Activated CD4-positive, alpha-beta memory T cell treated with anti-CD3 and anti-CD28 coated beads for 36 hours (primary cell): ENCODE measurements at regions of chr16 and their contacts with region 1.

Region 1: DNA sequence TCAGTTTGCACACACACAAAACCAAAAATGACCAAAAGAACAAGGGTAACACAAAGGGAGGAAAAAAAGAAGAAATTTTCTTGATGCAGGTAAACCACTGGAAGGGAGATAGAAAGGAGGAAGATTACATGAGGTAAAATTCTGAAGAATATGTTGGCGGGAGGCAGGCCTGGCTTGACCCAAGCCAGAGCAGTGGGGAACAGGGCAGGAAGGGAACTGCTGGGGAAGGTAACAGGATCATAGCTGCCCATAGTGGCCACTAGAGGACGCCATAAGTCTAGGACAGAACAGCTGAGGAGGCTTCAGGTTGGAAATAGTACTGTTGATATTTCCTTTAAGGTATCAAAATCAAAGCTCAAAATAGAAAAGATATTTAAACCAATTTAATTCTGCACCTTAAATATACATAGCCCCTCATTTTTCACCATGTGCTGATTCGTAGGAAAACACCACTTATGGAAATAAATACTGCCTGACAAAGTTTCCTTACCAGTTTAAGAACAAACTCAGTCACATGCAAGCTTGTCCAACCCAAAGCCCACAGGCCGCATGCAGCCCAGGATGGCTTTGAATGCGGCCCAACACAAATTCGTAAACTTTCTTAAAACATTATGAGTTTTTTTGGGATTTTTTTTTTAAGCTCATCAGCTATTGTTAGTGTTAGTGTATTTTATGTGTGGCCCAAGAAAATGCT is 15.5 kb downstream of the VPS35 start:
- DNase-seq: peak; percentile 61
- H3K4me3 Mint-ChIP-seq: no peak overlapping the region
- H3K27ac Mint-ChIP-seq: no peak overlapping the region
- H3K4me1 Mint-ChIP-seq: no peaks in the 10 kb centered on the region
- H3K27me3 Mint-ChIP-seq: no peaks in the 10 kb centered on the region

Region 2: GRCh38 chr16:46658925-46659324 is 14.5 kb before region 1 on chr16:
- CTCF ChIA-PET with region 1: interaction called, 14 read pairs
- POLR2A ChIA-PET with region 1: no interaction called
- intact Hi-C with region 1: no loop called
- DNase-seq: peak; percentile 57
- H3K4me3 Mint-ChIP-seq: no peak overlapping the region
- H3K27ac Mint-ChIP-seq: peak overlapping the region; percentile 64
- H3K4me1 Mint-ChIP-seq: peaks cover 12% of the 10 kb centered on the region
- H3K27me3 Mint-ChIP-seq: no peaks in the 10 kb centered on the region

Region 3: DNA sequence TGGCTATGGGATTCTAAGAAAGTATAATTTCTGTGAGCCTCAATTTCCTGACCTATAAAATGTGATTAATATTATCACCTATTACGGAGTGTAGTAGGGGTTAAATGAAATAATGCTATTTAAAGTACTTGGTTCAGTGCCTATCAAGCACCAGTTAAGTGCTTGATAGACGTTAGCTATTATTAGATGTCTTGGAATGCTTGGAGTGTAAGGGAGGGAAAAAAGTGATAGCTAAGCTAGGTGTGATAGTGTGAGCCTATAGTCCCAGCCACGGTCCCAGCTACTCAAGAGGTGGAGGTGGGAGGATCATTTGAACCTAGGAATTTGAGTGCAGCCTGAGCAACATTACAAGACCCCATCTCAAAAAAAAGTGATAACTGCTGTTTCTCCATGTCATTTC is 23.5 kb after region 1 on chr16:
- CTCF ChIA-PET with region 1: interaction called, 36 read pairs
- POLR2A ChIA-PET with region 1: interaction called, 3 read pairs
- intact Hi-C with region 1: no loop called
- DNase-seq: no peak
- H3K4me3 Mint-ChIP-seq: no peak overlapping the region
- H3K27ac Mint-ChIP-seq: no peak overlapping the region
- H3K4me1 Mint-ChIP-seq: no peaks in the 10 kb centered on the region
- H3K27me3 Mint-ChIP-seq: no peaks in the 10 kb centered on the region

Region 4: DNA sequence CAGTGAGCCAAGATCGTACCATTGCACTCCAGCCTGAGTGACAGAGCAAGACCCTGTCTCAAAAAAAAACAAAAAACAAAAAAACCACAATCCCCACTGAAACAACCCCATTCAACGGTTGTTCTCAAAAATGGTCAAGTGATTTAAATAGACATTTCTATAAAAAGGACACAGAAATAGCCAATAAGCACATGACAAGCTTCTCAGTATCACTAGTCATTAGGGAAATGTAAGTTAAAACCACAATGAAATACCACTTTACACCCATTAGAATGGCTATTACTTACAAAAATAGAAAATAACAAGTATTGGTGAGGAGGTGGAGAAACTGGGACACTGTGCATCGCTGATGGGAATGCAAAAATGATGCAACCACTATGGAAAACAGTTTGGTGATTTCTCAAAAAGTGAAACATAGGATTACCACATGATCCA is 101.3 kb after region 1 on chr16:
- CTCF ChIA-PET with region 1: no interaction called
- POLR2A ChIA-PET with region 1: no interaction called
- intact Hi-C with region 1: no loop called
- DNase-seq: no peak
- H3K4me3 Mint-ChIP-seq: no peak overlapping the region
- H3K27ac Mint-ChIP-seq: no peak overlapping the region
- H3K4me1 Mint-ChIP-seq: no peaks in the 10 kb centered on the region
- H3K27me3 Mint-ChIP-seq: no peaks in the 10 kb centered on the region

Region 5: GRCh38 chr16:46853713-46854443 is 180.4 kb after region 1 on chr16:
- CTCF ChIA-PET with region 1: interaction called, 15 read pairs
- POLR2A ChIA-PET with region 1: no interaction called
- intact Hi-C with region 1: loop called (anchors 1 kb)
- DNase-seq: peak; percentile 77
- H3K4me3 Mint-ChIP-seq: no peak overlapping the region
- H3K27ac Mint-ChIP-seq: no peak overlapping the region
- H3K4me1 Mint-ChIP-seq: no peaks in the 10 kb centered on the region
- H3K27me3 Mint-ChIP-seq: peaks cover 3% of the 10 kb centered on the region

Region 6: GRCh38 chr16:46908540-46909372 is 235.3 kb after region 1 on chr16:
- CTCF ChIA-PET with region 1: interaction called, 68 read pairs
- POLR2A ChIA-PET with region 1: no interaction called
- intact Hi-C with region 1: loop called (anchors 1 kb)
- DNase-seq: peak; percentile 66
- H3K4me3 Mint-ChIP-seq: no peak overlapping the region
- H3K27ac Mint-ChIP-seq: no peak overlapping the region
- H3K4me1 Mint-ChIP-seq: peaks cover 5% of the 10 kb centered on the region
- H3K27me3 Mint-ChIP-seq: no peaks in the 10 kb centered on the region

Region 7: GRCh38 chr16:46929378-46930332 is 256.2 kb after region 1 on chr16:
- CTCF ChIA-PET with region 1: interaction called, 11 read pairs
- POLR2A ChIA-PET with region 1: no interaction called
- intact Hi-C with region 1: loop called (anchors 1 kb)
- DNase-seq: peak; percentile 82
- H3K4me3 Mint-ChIP-seq: no peak overlapping the region
- H3K27ac Mint-ChIP-seq: no peak overlapping the region
- H3K4me1 Mint-ChIP-seq: no peaks in the 10 kb centered on the region
- H3K27me3 Mint-ChIP-seq: no peaks in the 10 kb centered on the region

Region 8: DNA sequence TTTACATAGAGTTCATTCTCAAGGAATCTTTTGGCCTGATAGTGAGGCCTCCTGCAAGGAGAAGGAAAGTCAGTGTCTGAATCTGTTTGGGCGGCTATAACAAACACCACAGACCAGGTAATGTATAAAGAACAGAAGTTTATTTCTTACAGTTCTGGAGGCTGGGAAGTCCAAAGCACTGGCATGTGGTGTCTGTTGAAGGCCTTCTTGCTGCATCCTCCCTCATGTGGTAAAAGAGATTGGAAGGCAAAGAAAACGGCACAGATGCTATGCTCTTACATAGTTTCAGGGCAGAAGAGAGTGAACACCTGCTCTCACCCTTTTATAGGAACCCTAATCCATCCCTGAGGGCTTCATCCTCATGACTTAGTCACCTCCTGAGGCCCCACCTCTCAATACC is 331.2 kb after region 1 on chr16:
- CTCF ChIA-PET with region 1: no interaction called
- POLR2A ChIA-PET with region 1: no interaction called
- intact Hi-C with region 1: no loop called
- DNase-seq: no peak
- H3K4me3 Mint-ChIP-seq: no peak overlapping the region
- H3K27ac Mint-ChIP-seq: no peak overlapping the region
- H3K4me1 Mint-ChIP-seq: no peaks in the 10 kb centered on the region
- H3K27me3 Mint-ChIP-seq: no peaks in the 10 kb centered on the region